Keratinocyte (primary cell): ENCODE measurements at regions of chr18 and their contacts with region 1.

Region 1: DNA sequence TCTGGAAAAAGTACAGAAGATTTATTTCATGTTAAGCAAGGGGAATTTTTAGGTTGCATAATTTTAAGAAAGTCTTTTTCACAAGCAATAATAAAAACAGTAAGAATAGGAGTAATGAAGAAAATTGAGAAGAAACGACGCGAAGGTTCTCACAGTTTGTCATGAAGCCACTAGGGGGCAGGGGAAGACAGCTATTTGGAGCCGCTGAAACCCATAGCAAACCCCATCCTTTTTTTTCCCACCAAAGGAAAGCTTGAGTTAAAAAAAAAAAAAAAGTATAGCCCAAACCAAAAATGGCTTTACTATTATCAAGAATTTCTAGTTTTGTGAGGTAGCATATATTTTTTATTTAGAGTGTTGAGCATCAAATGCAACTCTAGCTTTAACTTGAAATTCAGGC is 300.9 kb downstream of the PHLPP1 start:
- DNase-seq: no peak
- H3K4me3 ChIP-seq: no peak overlapping the region
- H3K27ac ChIP-seq: no peak overlapping the region
- H3K4me1 ChIP-seq: no peaks in the 10 kb centered on the region
- H3K27me3 ChIP-seq: peaks cover 4% of the 10 kb centered on the region
- CTCF ChIP-seq: peak; percentile 72 to 80 (median 73)

Region 2: GRCh38 chr18:63237881-63238667 is 221.8 kb after region 1 on chr18:
- dilution Hi-C with region 1: no loop called
- DNase-seq: peak; percentile 1
- H3K4me3 ChIP-seq: peak overlapping the region in 1 of 3 experiments; percentile 39
- H3K27ac ChIP-seq: peak overlapping the region; percentile 55
- H3K4me1 ChIP-seq: peaks cover 18% of the 10 kb centered on the region
- H3K27me3 ChIP-seq: no peaks in the 10 kb centered on the region
- CTCF ChIP-seq: no peak

Region 3: DNA sequence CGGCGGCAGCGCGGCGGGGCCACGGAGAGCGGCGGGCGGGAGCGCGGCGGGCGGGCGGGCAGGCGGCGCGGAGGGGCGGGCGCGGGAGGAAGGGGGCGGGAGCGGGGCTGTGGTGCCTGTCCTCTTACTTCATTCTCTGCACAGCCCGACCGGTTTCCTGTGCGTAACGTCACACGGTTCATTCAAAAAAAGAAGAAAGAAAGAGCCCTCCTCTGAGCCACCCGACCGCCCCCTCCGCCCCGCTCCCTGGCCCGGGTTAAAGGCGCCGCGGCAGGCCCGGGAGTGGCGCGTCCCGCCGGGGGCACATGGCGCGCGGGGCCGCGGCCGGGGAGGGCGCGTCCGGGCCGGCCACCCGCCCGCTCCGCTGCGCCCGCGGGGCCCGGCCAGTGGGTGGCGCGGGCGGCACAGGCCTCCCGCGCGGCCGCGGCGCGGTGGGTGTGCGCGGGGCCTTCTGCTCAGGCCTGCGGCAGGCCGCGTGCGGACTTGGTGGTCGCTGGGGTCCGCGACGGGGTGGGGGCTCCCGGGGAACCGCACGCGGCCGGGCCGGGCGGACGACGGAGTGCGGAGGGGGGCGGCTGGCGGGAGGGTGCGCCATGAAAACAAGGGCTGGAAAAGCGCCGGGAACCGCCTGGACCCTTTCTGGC is 303.9 kb after region 1 on chr18:
- dilution Hi-C with region 1: loop called (anchors 25 kb)
- DNase-seq: no peak
- H3K4me3 ChIP-seq: peak overlapping the region; percentile 49 to 63 (median 60)
- H3K27ac ChIP-seq: peak overlapping the region; percentile 39
- H3K4me1 ChIP-seq: peaks cover 20% of the 10 kb centered on the region
- H3K27me3 ChIP-seq: peaks cover 10% of the 10 kb centered on the region
- CTCF ChIP-seq: peak in 1 of 3 experiments; percentile 31